ENCODE measurements at regions of chr9 and their contacts with region 1.

Region 1: DNA sequence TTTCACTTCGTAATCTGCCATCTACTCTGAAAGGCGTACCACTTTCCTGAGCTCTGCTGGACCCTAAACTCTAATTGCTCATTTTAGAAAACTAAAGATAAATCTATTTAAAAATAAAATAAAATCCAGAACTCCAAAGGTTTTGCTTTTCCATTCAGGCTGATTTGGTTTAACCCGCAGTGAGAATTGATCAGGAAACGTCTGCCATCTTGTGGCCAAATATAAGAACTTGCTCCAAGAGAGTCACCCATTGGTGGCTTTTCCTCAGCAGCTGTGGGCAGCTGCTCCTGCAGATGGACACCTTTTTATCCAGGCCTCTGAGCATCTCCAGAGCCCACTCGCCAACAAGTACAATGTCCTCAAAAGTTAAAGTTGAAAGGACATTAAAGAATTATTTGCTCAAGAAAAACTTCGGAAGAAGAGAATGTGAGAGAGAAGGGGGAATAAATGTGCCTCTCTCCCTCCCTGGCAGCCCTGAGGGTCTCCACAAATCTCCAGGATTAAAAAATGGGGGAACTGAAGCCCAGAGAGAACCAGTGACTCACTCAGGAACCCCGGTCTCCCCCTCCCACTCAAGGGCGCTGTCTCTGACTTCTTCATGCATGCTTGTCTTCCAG is 4.1 kb downstream of the SAXO1 start:
- DNase-seq: peak in 4 of 5 donors; percentile 36 to 47 (median 37)
- ATAC-seq: peak; percentile 45 to 80 (median 68)
- H3K4me3 ChIP-seq: no peak overlapping the region
- H3K27ac ChIP-seq: no peak overlapping the region
- H3K4me1 ChIP-seq: peaks cover 0 to 3% (median 0%) of the 10 kb centered on the region in 12 donors
- H3K27me3 ChIP-seq: peaks cover 0 to 7% (median 0%) of the 10 kb centered on the region in 9 donors
- CTCF ChIP-seq: peak; percentile 65 to 85 (median 78)
- POLR2A ChIP-seq: no peak

Region 2: DNA sequence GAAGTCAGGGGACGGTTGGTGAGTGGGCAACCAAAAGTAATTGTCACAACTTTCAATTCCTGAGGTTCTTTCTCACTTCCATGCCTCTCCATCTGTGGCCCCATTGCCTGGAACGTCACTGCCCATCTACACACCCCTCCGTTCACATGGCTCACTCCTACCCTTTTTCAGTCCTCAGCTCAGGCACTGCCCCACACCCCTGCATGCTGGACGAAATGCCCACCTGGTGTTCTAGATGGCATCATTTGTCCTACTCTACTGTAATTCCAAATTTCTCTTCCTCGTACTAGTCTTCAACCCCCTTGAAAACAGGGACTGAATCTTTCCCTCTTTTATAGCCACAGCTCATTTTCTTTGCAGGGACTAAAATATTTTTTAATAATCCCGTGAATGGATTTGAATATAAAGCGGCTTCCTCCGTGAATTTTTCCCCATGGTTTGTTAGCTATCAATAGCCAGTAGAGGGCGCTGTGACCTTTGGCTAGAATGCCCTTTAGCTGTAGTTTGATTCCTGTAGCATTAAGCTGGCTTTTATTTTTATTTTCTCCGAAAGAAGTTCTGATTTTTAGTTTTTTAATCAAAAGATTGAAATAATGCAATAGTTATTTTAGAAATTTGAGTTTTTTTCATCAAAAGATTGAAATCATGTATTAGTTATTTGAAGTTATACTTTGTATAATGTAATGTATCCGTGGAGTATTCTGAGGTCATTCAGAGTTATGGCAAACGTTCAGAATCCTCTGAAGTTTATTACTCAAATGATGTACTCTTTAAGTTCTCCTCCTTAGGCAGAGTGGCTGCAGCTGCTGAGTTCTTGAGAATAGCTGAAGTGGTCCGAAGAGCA is 1218.0 kb before region 1 on chr9:
- intact Hi-C with region 1: loop called in 8 of 10 experiments (anchors 5 to 10 kb)
- DNase-seq: peak in 4 of 5 donors; percentile 29 to 48 (median 35)
- ATAC-seq: peak in 1 of 4 donors; percentile 47
- H3K4me3 ChIP-seq: no peak overlapping the region
- H3K27ac ChIP-seq: no peak overlapping the region
- H3K4me1 ChIP-seq: no peaks in the 10 kb centered on the region
- H3K27me3 ChIP-seq: peaks cover 0 to 14% (median 0%) of the 10 kb centered on the region in 9 donors
- CTCF ChIP-seq: peak; percentile 72 to 93 (median 84)
- POLR2A ChIP-seq: no peak

Region 3: DNA sequence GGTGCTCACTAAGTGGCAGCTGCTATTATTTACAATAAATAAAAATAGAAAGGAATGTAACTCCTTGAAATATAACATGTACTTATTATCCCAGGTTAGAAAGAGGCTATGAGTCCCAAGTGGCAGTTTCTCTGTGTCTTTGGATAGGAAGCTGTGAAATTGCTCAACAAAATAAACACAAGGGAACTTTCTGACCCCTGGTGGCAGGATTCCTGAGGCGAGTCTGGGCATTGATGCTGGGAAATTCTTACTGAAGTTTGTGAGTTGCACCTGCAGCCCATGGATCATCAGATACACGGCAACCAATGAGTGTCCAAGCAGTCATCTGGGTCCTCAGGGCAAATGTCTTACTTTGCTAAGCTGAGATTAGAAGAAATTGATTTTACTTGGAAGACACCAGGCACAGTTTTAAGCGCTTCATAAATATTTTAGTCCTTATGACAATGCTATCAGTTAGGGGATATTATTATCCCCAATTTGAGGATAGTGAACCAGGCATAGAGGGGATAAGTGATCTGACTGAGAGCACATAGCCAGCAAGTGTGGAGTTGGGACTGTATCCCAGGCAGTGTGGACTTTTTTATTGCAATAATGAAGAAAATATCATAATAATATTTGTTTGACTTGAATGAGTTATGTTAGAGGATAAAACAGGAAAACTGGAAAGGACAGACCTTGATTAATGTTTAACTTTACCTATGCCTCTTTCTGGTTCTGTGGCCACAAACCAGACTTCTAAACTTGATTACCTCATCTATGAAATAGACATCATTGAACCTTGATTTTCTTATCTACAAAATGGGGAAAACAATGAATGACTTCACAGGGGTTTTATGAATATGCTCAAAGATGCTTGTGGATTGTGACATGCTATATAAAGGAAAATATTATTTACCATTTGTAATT is 820.5 kb before region 1 on chr9:
- intact Hi-C with region 1: loop called in 1 of 10 experiments (anchors 5 kb)
- DNase-seq: peak in 3 of 5 donors; percentile 13 to 26 (median 23)
- ATAC-seq: peak in 2 of 4 donors; percentile 51 to 52
- H3K4me3 ChIP-seq: no peak overlapping the region
- H3K27ac ChIP-seq: no peak overlapping the region
- H3K4me1 ChIP-seq: no peaks in the 10 kb centered on the region
- H3K27me3 ChIP-seq: no peaks in the 10 kb centered on the region
- CTCF ChIP-seq: peak; percentile 23 to 62 (median 50)
- POLR2A ChIP-seq: no peak

Region 4: GRCh38 chr9:18442629-18443491 is 586.1 kb before region 1 on chr9:
- intact Hi-C with region 1: loop called in 7 of 10 experiments (anchors 5 to 10 kb)
- DNase-seq: peak; percentile 68 to 81 (median 72)
- ATAC-seq: peak; percentile 74 to 89 (median 81)
- H3K4me3 ChIP-seq: no peak overlapping the region
- H3K27ac ChIP-seq: peak overlapping the region in 1 of 12 donors; percentile 31
- H3K4me1 ChIP-seq: peaks cover 0 to 21% (median 11%) of the 10 kb centered on the region in 12 donors
- H3K27me3 ChIP-seq: no peaks in the 10 kb centered on the region
- CTCF ChIP-seq: peak; percentile 86 to 97 (median 92)
- POLR2A ChIP-seq: no peak

Region 5: GRCh38 chr9:18861609-18862544 is 167.1 kb before region 1 on chr9:
- intact Hi-C with region 1: loop called in 1 of 10 experiments (anchors 10 kb)
- DNase-seq: peak in 4 of 5 donors; percentile 41 to 58 (median 49)
- ATAC-seq: peak; percentile 72 to 92 (median 87)
- H3K4me3 ChIP-seq: peak overlapping the region in 2 of 12 donors; percentile 0
- H3K27ac ChIP-seq: peak overlapping the region in 6 of 12 donors; percentile 7 to 62 (median 30)
- H3K4me1 ChIP-seq: peaks cover 0 to 26% (median 14%) of the 10 kb centered on the region in 12 donors
- H3K27me3 ChIP-seq: no peaks in the 10 kb centered on the region
- CTCF ChIP-seq: peak in 6 of 12 donors; percentile 8 to 50 (median 20)
- POLR2A ChIP-seq: no peak

Region 6: GRCh38 chr9:19174127-19174912 is 145.4 kb after region 1 on chr9:
- intact Hi-C with region 1: no loop called
- DNase-seq: peak; percentile 34 to 84 (median 79)
- ATAC-seq: peak; percentile 82 to 96 (median 88)
- H3K4me3 ChIP-seq: no peak overlapping the region
- H3K27ac ChIP-seq: peak overlapping the region in 1 of 12 donors; percentile 13
- H3K4me1 ChIP-seq: peaks cover 0 to 28% (median 0%) of the 10 kb centered on the region in 12 donors
- H3K27me3 ChIP-seq: no peaks in the 10 kb centered on the region
- CTCF ChIP-seq: peak; percentile 35 to 77 (median 67)
- POLR2A ChIP-seq: no peak

Region 7: GRCh38 chr9:19255821-19256220 is 226.9 kb after region 1 on chr9:
- intact Hi-C with region 1: no loop called
- DNase-seq: no peak
- ATAC-seq: no peak
- H3K4me3 ChIP-seq: no peak overlapping the region
- H3K27ac ChIP-seq: no peak overlapping the region
- H3K4me1 ChIP-seq: peaks cover 0 to 27% (median 20%) of the 10 kb centered on the region in 12 donors
- H3K27me3 ChIP-seq: no peaks in the 10 kb centered on the region
- CTCF ChIP-seq: no peak
- POLR2A ChIP-seq: no peak